ENCODE measurements at regions of chr1 and their contacts with region 1.

Region 1: DNA sequence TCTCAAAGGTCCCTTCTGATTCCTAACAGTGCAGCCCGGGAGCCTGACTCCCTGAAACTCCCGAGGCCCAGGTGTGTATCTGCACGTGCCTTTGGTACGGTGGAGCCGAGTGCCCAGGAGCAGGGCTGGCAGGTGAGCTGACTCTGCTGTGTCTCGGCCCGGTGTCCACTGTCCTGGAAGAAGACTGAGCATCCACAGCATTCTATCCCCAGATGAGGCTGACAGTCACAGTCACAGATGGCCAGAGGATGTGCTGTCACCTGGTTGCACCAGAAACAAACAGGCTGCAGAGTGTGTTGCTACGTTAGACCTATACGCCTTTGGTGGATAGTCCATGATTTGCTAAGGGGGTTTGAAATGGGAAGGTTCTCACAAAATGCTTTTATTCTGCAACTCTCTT is 9.8 kb downstream of the ETV3L start:
- DNase-seq: peak in 1 of 2 donors; percentile 24
- H3K4me3 ChIP-seq: no peak overlapping the region
- H3K27ac ChIP-seq: no peak overlapping the region
- H3K4me1 ChIP-seq: peaks cover 3 to 15% (median 11%) of the 10 kb centered on the region in 4 donors
- H3K27me3 ChIP-seq: peaks cover 0 to 5% (median 0%) of the 10 kb centered on the region in 3 donors
- CTCF ChIP-seq: no peak
- EP300 ChIP-seq: no peak
- POLR2A ChIP-seq: no peak

Region 2: GRCh38 chr1:156948708-156949107 is 141.1 kb before region 1 on chr1:
- intact Hi-C with region 1: no loop called
- DNase-seq: no peak
- H3K4me3 ChIP-seq: no peak overlapping the region
- H3K27ac ChIP-seq: no peak overlapping the region
- H3K4me1 ChIP-seq: no peaks in the 10 kb centered on the region
- H3K27me3 ChIP-seq: no peaks in the 10 kb centered on the region
- CTCF ChIP-seq: no peak
- EP300 ChIP-seq: no peak
- POLR2A ChIP-seq: no peak

Region 3: GRCh38 chr1:157156058-157156541 is 66.3 kb after region 1 on chr1:
- intact Hi-C with region 1: loop called (anchors 2 kb)
- DNase-seq: peak; percentile 82 to 91
- H3K4me3 ChIP-seq: peak overlapping the region in 2 of 4 donors; percentile 3 to 6
- H3K27ac ChIP-seq: peak overlapping the region in 3 of 5 donors; percentile 56 to 70 (median 70)
- H3K4me1 ChIP-seq: peaks cover 20 to 41% (median 26%) of the 10 kb centered on the region in 4 donors
- H3K27me3 ChIP-seq: peaks cover 0 to 15% (median 0%) of the 10 kb centered on the region in 3 donors
- CTCF ChIP-seq: peak in 6 of 7 experiments; percentile 91 to 99 (median 94)
- EP300 ChIP-seq: no peak
- POLR2A ChIP-seq: no peak

Measured in stomach (tissue), 19 donors.